GM12878 (cell line): ENCODE measurements at regions of chr4 and their contacts with region 1.

Region 1: GRCh38 chr4:53640576-53641453 is 49.5 kb upstream of the LNX1 start:
- DNase-seq: peak; percentile 76
- ATAC-seq: peak; percentile 89
- H3K4me3 ChIP-seq: no peak overlapping the region
- H3K27ac ChIP-seq: peak overlapping the region; percentile 68
- H3K4me1 ChIP-seq: peaks cover 19% of the 10 kb centered on the region; the same call in 1 of the 2 replicates
- H3K27me3 ChIP-seq: no peaks in the 10 kb centered on the region
- CTCF ChIP-seq: no peak
- EP300 ChIP-seq: peak in 1 of 2 experiments; percentile 27; a peak in 1 of 4 replicates
- POLR2A ChIP-seq: no peak
- RAD21 ChIP-seq: no peak

Region 2: DNA sequence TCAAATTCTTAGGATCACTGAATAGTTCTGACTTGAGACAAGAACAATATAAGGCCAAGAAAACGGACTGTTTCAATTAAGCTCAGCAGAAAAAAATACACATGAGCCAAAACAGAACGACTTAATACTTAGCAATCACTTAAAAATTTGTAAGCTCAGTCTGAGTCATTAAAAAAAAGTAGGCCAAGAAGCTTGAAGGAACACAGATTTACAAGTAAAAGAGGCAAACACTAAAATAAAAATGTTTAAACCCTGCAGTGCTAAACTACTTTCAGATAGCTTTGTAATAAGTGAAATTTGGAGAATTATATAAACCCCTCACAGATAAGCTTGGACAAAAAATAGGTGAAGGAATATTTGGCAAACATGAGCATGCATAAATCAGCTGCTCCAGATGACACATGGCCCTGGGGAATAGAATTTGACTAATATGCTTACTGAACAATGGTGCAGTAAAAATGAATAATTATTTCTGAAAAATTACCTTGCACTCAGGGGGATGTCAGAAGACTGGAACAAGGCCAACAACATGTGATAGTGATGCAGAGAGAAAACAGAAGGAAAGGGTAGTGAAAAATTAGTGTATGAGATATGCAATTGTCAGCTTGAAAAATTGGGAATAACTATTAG is 99.1 kb before region 1 on chr4:
- CTCF ChIA-PET with region 1: no interaction called
- POLR2A ChIA-PET with region 1: interaction called, 4 read pairs
- RAD21 ChIA-PET with region 1: interaction called, 18 read pairs
- SMC1A ChIA-PET with region 1: interaction called, 4 read pairs
- in situ Hi-C with region 1: no loop called
- intact Hi-C with region 1: no loop called
- DNase-seq: no peak
- ATAC-seq: peak; percentile 61
- H3K4me3 ChIP-seq: no peak overlapping the region
- H3K27ac ChIP-seq: no peak overlapping the region
- H3K4me1 ChIP-seq: no peaks in the 10 kb centered on the region
- H3K27me3 ChIP-seq: no peaks in the 10 kb centered on the region
- CTCF ChIP-seq: no peak
- EP300 ChIP-seq: no peak
- POLR2A ChIP-seq: no peak
- RAD21 ChIP-seq: no peak

Region 3: DNA sequence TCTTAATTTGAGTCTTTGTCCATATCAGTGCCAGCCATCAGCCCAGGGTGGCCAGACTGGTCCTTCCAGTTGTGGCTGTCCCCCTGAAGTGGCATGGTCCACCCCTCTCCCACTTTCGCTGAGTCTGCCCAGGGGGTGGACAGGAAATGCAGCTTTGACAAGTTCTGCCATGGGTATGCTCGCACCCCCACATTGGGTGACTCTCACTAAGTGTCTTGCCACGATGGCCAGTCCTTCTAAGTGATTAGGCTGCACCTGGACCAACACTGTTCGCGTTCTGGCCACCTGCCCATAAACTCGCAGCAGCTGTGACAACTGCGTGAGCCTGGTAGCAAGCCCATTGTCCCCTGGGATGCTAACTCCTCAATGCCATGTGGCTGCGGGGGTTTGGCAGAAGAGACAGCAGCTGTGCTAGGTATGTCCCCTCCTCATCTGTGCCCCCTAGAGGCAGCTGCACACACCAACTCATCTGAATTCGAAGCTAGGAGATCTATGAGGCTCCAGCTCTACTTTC is 39.5 kb before region 1 on chr4:
- CTCF ChIA-PET with region 1: interaction called, 6 read pairs
- POLR2A ChIA-PET with region 1: interaction called, 4 read pairs
- RAD21 ChIA-PET with region 1: interaction called, 8 read pairs
- SMC1A ChIA-PET with region 1: interaction called, 18 read pairs
- in situ Hi-C with region 1: no loop called
- intact Hi-C with region 1: loop called (anchors 5 kb)
- DNase-seq: no peak
- ATAC-seq: peak; percentile 89
- H3K4me3 ChIP-seq: no peak overlapping the region
- H3K27ac ChIP-seq: no peak overlapping the region
- H3K4me1 ChIP-seq: peaks cover 16% of the 10 kb centered on the region
- H3K27me3 ChIP-seq: no peaks in the 10 kb centered on the region
- CTCF ChIP-seq: peak; percentile 35 to 49 (median 45); a peak in 5 of 6 replicates
- EP300 ChIP-seq: no peak
- POLR2A ChIP-seq: no peak
- RAD21 ChIP-seq: peak; percentile 44

Region 4: GRCh38 chr4:53626491-53626890 is 14.3 kb before region 1 on chr4:
- CTCF ChIA-PET with region 1: interaction called, 6 read pairs
- POLR2A ChIA-PET with region 1: interaction called, 5 read pairs
- RAD21 ChIA-PET with region 1: interaction called, 6 read pairs
- SMC1A ChIA-PET with region 1: interaction called, 10 read pairs
- in situ Hi-C with region 1: no loop called
- intact Hi-C with region 1: no loop called
- DNase-seq: no peak
- ATAC-seq: no peak
- H3K4me3 ChIP-seq: no peak overlapping the region
- H3K27ac ChIP-seq: no peak overlapping the region
- H3K4me1 ChIP-seq: no peaks in the 10 kb centered on the region
- H3K27me3 ChIP-seq: no peaks in the 10 kb centered on the region
- CTCF ChIP-seq: no peak
- EP300 ChIP-seq: no peak
- POLR2A ChIP-seq: no peak
- RAD21 ChIP-seq: no peak

Region 5: DNA sequence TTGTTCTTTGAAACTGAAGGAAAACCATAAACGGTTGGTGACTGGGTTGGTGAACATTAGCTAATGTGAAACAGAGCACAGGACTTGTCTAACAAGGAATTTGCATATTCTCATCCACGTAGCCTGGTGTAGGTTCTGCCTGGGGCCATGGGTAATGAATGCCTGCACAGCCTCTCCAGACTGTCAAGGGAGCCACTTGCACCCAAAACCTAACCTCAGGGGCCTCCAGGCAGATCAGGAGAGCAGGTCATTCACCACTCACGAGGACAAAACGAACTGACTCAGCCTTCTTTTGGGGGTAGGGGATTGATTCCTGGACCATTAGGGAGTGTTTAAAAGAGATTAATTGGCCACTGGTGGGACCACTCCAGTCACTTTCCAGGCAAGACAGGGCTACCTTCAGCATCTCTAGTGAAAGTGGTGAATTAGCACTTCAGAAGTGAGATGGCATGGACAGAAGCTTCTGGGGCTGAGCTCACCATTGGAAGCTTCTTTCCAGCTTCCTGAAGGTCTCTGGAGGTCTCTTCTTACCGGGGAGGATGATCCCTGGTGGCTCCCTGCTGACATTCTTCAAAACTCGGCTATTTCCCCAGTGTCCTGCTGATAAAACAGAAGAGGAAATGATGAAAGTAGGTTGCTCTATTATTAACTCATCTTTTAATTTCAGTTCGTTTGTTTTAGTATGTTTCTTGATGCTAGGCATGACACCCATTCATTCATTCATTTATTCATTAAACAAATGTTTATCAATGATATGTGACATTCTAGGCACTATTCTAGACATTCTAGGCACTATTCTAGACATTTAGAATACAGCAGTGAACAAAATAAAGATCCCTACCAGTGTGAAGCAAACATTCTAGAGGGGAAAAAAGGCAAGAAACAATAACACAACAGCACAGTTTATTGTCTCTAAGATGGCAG is 55.0 kb after region 1 on chr4:
- CTCF ChIA-PET with region 1: interaction called, 6 read pairs
- POLR2A ChIA-PET with region 1: interaction called, 10 read pairs
- RAD21 ChIA-PET with region 1: interaction called, 30 read pairs
- SMC1A ChIA-PET with region 1: interaction called, 34 read pairs
- in situ Hi-C with region 1: loop called (anchors 10 kb)
- intact Hi-C with region 1: no loop called
- DNase-seq: peak; percentile 53
- ATAC-seq: peak; percentile 91
- H3K4me3 ChIP-seq: no peak overlapping the region
- H3K27ac ChIP-seq: peak overlapping the region; percentile 0; the same call in 1 of the 2 replicates
- H3K4me1 ChIP-seq: peaks cover 7% of the 10 kb centered on the region
- H3K27me3 ChIP-seq: no peaks in the 10 kb centered on the region
- CTCF ChIP-seq: no peak
- EP300 ChIP-seq: peak; percentile 13 to 34; a peak in 1 of 4 replicates
- POLR2A ChIP-seq: no peak
- RAD21 ChIP-seq: no peak

Region 6: GRCh38 chr4:53804719-53805118 is 163.9 kb after region 1 on chr4:
- CTCF ChIA-PET with region 1: no interaction called
- POLR2A ChIA-PET with region 1: no interaction called
- RAD21 ChIA-PET with region 1: interaction called, 6 read pairs
- SMC1A ChIA-PET with region 1: interaction called, 13 read pairs
- in situ Hi-C with region 1: no loop called
- intact Hi-C with region 1: no loop called
- DNase-seq: peak; percentile 12
- ATAC-seq: peak; percentile 98
- H3K4me3 ChIP-seq: no peak overlapping the region
- H3K27ac ChIP-seq: no peak overlapping the region
- H3K4me1 ChIP-seq: 0 out of 2 replicates have a peak, but pooled peaks cover 3% of the 10 kb centered on the region
- H3K27me3 ChIP-seq: no peaks in the 10 kb centered on the region
- CTCF ChIP-seq: peak; percentile 65 to 74 (median 72)
- EP300 ChIP-seq: no peak
- POLR2A ChIP-seq: no peak
- RAD21 ChIP-seq: peak; percentile 77

Region 7: GRCh38 chr4:53962516-53963225 is 321.9 kb after region 1 on chr4:
- CTCF ChIA-PET with region 1: no interaction called
- POLR2A ChIA-PET with region 1: no interaction called
- RAD21 ChIA-PET with region 1: no interaction called
- SMC1A ChIA-PET with region 1: no interaction called
- in situ Hi-C with region 1: no loop called
- intact Hi-C with region 1: no loop called
- DNase-seq: no peak
- ATAC-seq: no peak
- H3K4me3 ChIP-seq: no peak overlapping the region
- H3K27ac ChIP-seq: no peak overlapping the region
- H3K4me1 ChIP-seq: no peaks in the 10 kb centered on the region
- H3K27me3 ChIP-seq: peaks cover 0 to 2% of the 10 kb centered on the region in 2 experiments; a peak in 2 of 4 replicates
- CTCF ChIP-seq: no peak
- EP300 ChIP-seq: no peak
- POLR2A ChIP-seq: no peak
- RAD21 ChIP-seq: no peak